ENCODE measurements at regions of chr7 and their contacts with region 1.

Region 1: DNA sequence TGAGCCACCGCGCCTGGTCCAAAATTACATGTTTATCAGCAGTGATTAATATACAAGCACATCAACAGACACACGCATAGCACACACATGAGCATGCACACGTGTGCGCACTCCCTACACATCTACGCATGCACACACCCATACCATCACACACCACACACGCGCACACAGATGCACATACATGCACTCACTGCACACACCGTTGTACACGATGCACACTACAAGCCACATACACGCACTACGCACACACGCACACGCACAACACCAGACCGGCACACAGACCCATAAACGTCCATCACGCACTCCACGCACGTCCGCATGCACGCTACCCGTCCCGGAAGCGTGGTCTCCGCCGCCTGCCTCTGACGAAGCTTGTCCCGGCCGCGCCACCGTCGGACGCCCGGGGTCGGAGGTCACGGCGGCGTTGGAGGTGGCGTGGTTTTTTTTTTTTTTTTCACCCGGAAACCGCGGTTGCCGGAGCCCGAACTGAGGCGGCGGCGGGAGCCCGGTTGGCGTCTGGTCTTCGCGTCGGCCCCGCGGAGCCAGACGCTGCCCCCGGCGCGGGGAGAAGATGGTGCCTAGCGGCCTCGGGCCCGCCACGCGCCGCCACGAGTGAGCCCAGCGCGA is at the start of gene TMEM248:
- DNase-seq: peak; percentile 84 to 96 (median 91)
- ATAC-seq: peak; percentile 90
- H3K4me3 ChIP-seq: peak within 1 kb of the TSS; percentile 83 to 94
- H3K4me3 Mint-ChIP-seq: peak within 1 kb of the TSS; percentile 98
- H3K27ac ChIP-seq: peak within 1 kb of the TSS; percentile 75 to 80
- H3K27ac Mint-ChIP-seq: peak within 1 kb of the TSS; percentile 97
- H3K4me1 ChIP-seq: peaks cover 20% of the 10 kb centered on the region
- H3K4me1 Mint-ChIP-seq: peaks cover 37% of the 10 kb centered on the region
- H3K27me3 ChIP-seq: no peaks in the 10 kb centered on the region
- H3K27me3 Mint-ChIP-seq: no peaks in the 10 kb centered on the region
- CTCF ChIP-seq: no peak
- total RNA-seq, gene TMEM248: 67.2 to 72.1 TPM

Region 2: DNA sequence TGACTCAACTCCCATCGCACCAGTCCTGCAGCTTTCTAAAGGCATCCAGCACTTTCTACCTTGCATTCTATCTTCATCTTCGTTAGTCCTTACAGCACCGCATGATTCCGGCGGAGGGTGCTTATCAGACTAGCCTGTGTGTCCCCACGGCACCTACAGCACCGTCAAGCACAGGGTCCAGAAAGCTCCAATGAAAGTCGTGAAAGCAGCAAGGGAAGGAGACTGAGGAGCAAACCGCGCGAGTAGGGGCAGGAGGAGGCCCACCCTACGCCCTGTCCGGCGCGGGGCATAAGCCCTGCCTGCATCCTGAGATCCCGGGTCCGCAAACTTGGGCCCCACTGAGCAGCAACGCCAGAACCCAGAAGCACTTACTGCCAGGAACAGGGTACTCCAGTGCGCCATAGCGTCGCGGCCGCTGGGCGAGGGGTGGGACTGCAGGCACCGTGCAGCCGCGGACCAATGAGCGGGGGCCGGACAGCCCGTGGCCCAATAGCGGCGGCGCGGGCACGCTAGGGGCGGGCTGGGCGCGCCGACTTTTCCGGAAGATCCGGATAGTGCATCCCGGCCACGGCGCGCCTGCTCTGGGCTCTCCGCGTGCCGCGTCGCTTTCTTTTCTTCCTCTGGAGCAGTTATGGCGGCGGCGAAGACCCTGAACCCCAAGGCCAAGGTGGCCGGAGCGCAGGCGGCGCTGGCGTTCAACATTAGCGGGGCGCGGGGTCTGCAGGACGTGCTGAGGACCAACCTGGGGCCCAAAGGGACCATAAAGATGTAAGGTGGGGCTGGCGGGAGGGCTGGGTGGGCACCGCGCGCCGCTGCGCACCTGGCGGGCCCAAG is 1170.2 kb before region 1 on chr7:
- CTCF ChIA-PET with region 1: no interaction called
- POLR2A ChIA-PET with region 1: no interaction called
- intact Hi-C with region 1: loop called in 1 of 2 experiments (anchors 5 kb)
- DNase-seq: peak; percentile 65 to 91 (median 87)
- ATAC-seq: peak; percentile 96
- H3K4me3 ChIP-seq: peak overlapping the region; percentile 77 to 88
- H3K4me3 Mint-ChIP-seq: peak overlapping the region; percentile 88
- H3K27ac ChIP-seq: peak overlapping the region; percentile 74 to 81
- H3K27ac Mint-ChIP-seq: peak overlapping the region; percentile 88
- H3K4me1 ChIP-seq: peaks cover 16% of the 10 kb centered on the region
- H3K4me1 Mint-ChIP-seq: peaks cover 35% of the 10 kb centered on the region
- H3K27me3 ChIP-seq: no peaks in the 10 kb centered on the region
- H3K27me3 Mint-ChIP-seq: no peaks in the 10 kb centered on the region
- CTCF ChIP-seq: no peak

Region 3: GRCh38 chr7:66204822-66205740 is 715.8 kb before region 1 on chr7 and contains the start of gene TPST1:
- CTCF ChIA-PET with region 1: no interaction called
- POLR2A ChIA-PET with region 1: no interaction called
- intact Hi-C with region 1: loop called in 1 of 2 experiments (anchors 2 kb)
- DNase-seq: peak; percentile 61 to 90 (median 75)
- ATAC-seq: peak; percentile 89
- H3K4me3 ChIP-seq: peak within 1 kb of the TSS; percentile 59 to 84
- H3K4me3 Mint-ChIP-seq: peak within 1 kb of the TSS; percentile 89
- H3K27ac ChIP-seq: peak within 1 kb of the TSS in 1 of 2 experiments; percentile 54
- H3K27ac Mint-ChIP-seq: peak within 1 kb of the TSS; percentile 66
- H3K4me1 ChIP-seq: peaks cover 35% of the 10 kb centered on the region
- H3K4me1 Mint-ChIP-seq: peaks cover 42% of the 10 kb centered on the region
- H3K27me3 ChIP-seq: peaks cover 0 to 3% of the 10 kb centered on the region in 2 experiments
- H3K27me3 Mint-ChIP-seq: peaks cover 6% of the 10 kb centered on the region
- CTCF ChIP-seq: peak; percentile 48
- total RNA-seq, gene TPST1: 4.3 to 6.6 TPM

Region 4: GRCh38 chr7:66654123-66654732 is 266.7 kb before region 1 on chr7:
- CTCF ChIA-PET with region 1: no interaction called
- POLR2A ChIA-PET with region 1: interaction called, 3 read pairs
- intact Hi-C with region 1: loop called in 1 of 2 experiments (anchors 10 kb)
- DNase-seq: peak; percentile 94 to 99 (median 98)
- ATAC-seq: peak; percentile 91
- H3K4me3 ChIP-seq: peak overlapping the region; percentile 64 to 86
- H3K4me3 Mint-ChIP-seq: peak overlapping the region; percentile 99
- H3K27ac ChIP-seq: peak overlapping the region; percentile 92 to 98
- H3K27ac Mint-ChIP-seq: peak overlapping the region; percentile 99
- H3K4me1 ChIP-seq: peaks cover 7% of the 10 kb centered on the region
- H3K4me1 Mint-ChIP-seq: peaks cover 24% of the 10 kb centered on the region
- H3K27me3 ChIP-seq: no peaks in the 10 kb centered on the region
- H3K27me3 Mint-ChIP-seq: no peaks in the 10 kb centered on the region
- CTCF ChIP-seq: no peak

Region 5: GRCh38 chr7:66740302-66740979 is 180.4 kb before region 1 on chr7 and contains the start of gene RABGEF1:
- CTCF ChIA-PET with region 1: no interaction called
- POLR2A ChIA-PET with region 1: interaction called, 3 read pairs
- intact Hi-C with region 1: loop called (anchors 1 to 2 kb)
- DNase-seq: peak; percentile 91 to 99 (median 98)
- ATAC-seq: peak; percentile 93
- H3K4me3 ChIP-seq: peak within 1 kb of the TSS; percentile 71 to 88
- H3K4me3 Mint-ChIP-seq: peak within 1 kb of the TSS; percentile 94
- H3K27ac ChIP-seq: peak within 1 kb of the TSS; percentile 92 to 95
- H3K27ac Mint-ChIP-seq: peak within 1 kb of the TSS; percentile 98
- H3K4me1 ChIP-seq: peaks cover 18% of the 10 kb centered on the region
- H3K4me1 Mint-ChIP-seq: peaks cover 51% of the 10 kb centered on the region
- H3K27me3 ChIP-seq: no peaks in the 10 kb centered on the region
- H3K27me3 Mint-ChIP-seq: no peaks in the 10 kb centered on the region
- CTCF ChIP-seq: no peak
- total RNA-seq, gene RABGEF1: 34.5 to 38.5 TPM

Region 6: GRCh38 chr7:66907731-66908130 is 13.2 kb before region 1 on chr7:
- CTCF ChIA-PET with region 1: no interaction called
- POLR2A ChIA-PET with region 1: no interaction called
- intact Hi-C with region 1: no loop called
- DNase-seq: no peak
- ATAC-seq: no peak
- H3K4me3 ChIP-seq: no peak overlapping the region
- H3K4me3 Mint-ChIP-seq: no peak overlapping the region
- H3K27ac ChIP-seq: no peak overlapping the region
- H3K27ac Mint-ChIP-seq: no peak overlapping the region
- H3K4me1 ChIP-seq: no peaks in the 10 kb centered on the region
- H3K4me1 Mint-ChIP-seq: no peaks in the 10 kb centered on the region
- H3K27me3 ChIP-seq: no peaks in the 10 kb centered on the region
- H3K27me3 Mint-ChIP-seq: no peaks in the 10 kb centered on the region
- CTCF ChIP-seq: no peak

Region 7: DNA sequence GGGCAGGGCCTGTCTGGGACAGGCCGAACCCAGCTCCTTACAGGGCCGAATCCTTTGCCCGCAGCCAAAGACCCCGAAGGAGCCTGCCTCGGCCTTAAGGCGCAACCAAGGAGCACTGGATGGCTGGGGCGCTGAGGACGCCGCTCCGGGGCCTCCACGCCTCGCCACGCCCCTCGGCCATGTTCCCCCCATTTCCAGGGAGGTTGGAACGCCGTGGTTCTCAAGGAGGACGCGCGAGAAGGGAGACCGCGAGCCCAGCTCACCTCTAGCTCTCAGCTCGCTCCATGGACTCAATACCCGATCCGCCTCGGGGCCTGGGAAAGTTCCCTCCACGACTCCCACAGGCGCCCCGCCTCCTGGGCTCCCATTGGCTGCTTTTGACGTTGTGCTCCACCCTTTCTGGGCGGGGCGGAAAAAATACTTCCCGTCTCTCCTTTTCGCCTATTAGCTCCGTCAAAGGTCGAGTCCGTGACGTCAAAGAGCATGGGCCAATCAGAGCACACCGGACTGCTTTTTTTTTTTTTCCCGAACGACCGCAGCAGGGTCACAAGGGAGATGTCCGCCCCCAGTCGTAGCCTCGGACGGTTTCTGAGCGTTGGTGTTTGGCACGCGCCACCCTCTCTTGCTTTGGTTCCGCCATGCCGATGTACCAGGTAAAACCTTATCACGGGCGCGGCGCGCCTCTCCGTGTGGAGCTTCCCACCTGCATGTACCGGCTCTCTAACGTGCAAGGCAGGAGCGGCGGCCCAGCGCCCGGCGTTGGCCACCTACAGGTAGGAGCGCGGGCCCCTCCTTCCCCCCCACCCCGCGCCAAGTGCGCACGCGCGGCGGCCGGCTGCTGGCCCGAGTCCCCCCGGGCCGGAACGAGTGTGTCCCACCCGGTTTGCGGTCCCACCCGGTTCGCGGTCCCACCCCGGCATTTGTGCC is 381.5 kb after region 1 on chr7:
- CTCF ChIA-PET with region 1: no interaction called
- POLR2A ChIA-PET with region 1: interaction called, 4 read pairs
- intact Hi-C with region 1: loop called (anchors 5 to 10 kb)
- DNase-seq: peak; percentile 93 to 99 (median 97)
- ATAC-seq: peak; percentile 77
- H3K4me3 ChIP-seq: peak overlapping the region; percentile 81 to 99
- H3K4me3 Mint-ChIP-seq: peak overlapping the region; percentile 97
- H3K27ac ChIP-seq: peak overlapping the region; percentile 92 to 93
- H3K27ac Mint-ChIP-seq: peak overlapping the region; percentile 99
- H3K4me1 ChIP-seq: no peaks in the 10 kb centered on the region
- H3K4me1 Mint-ChIP-seq: peaks cover 27% of the 10 kb centered on the region
- H3K27me3 ChIP-seq: no peaks in the 10 kb centered on the region
- H3K27me3 Mint-ChIP-seq: no peaks in the 10 kb centered on the region
- CTCF ChIP-seq: no peak